ENCODE measurements at regions of chr5 and their contacts with region 1.

Region 1: DNA sequence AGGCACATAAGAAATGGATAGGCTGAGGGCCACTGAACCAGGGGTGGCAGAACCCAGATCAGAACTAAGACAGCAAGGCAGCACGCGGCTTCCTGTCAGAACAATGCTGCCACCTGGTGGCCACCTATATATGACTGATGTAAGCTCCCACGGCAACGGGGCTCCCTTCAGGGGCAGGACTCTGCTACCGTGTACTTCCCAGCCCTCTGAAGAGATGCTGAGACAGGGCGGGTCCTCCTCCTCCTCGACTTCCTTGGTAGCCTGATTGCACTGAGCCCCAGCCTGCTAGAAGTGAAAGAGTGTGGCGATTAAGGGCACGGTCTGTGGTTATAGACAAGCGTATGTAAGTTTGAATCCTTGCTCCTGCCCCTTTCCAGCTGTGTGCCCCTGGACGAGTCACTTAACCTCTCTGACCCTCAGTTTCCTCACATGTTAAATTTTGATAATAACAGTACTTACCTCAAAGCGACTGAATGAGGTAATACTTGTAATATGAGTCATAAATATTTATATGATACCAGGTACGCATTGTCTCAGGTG is 13.3 kb downstream of the RPS14 start:
- DNase-seq: peak; percentile 91
- ATAC-seq: peak; percentile 92
- H3K4me3 ChIP-seq: peak overlapping the region; percentile 16; the same call in 1 of the 2 replicates
- H3K27ac ChIP-seq: no peak overlapping the region
- H3K4me1 ChIP-seq: peaks cover 7% of the 10 kb centered on the region; the same call in 1 of the 2 replicates
- H3K27me3 ChIP-seq: no peaks in the 10 kb centered on the region
- CTCF ChIP-seq: peak; percentile 94

Region 2: DNA sequence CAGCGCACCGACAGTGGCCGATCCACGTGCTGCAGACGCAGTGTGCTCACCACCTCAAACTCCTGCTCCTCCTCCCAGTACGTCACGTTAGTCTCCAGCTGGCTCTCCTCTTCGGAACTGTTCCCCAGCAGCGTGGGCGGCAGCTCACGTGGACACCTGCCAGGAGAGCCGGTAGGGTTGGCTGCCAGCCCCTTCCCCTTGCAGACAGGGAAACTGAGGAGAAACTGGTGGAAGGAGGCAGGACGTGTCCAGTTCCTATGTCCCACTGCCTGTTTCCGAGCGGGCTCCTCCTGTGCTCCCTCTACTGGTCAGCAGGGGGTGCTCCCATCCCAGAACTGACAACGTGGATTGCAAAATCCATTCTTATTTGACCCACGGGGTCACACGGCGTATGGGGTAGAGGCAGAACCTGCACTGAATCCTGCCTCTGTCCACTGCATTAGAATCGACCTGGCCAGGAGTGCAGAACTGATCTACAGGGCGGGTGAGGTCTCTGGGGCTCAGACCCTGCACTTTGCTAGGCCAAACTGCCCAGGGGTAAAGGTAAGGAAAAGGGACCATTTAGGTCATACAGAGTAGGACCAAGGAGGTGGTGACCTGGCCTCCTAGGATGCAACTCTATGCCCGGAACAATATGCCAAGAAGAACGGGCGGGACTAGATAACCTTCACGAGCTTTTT is 306.3 kb before region 1 on chr5:
- CTCF ChIA-PET with region 1: no interaction called
- POLR2A ChIA-PET with region 1: no interaction called
- intact Hi-C with region 1: loop called (anchors 10 kb)
- DNase-seq: peak; percentile 88
- ATAC-seq: peak; percentile 89
- H3K4me3 ChIP-seq: peak overlapping the region; percentile 59
- H3K27ac ChIP-seq: no peak overlapping the region
- H3K4me1 ChIP-seq: peaks cover 6% of the 10 kb centered on the region; the same call in 1 of the 2 replicates
- H3K27me3 ChIP-seq: no peaks in the 10 kb centered on the region
- CTCF ChIP-seq: peak; percentile 99

Region 3: DNA sequence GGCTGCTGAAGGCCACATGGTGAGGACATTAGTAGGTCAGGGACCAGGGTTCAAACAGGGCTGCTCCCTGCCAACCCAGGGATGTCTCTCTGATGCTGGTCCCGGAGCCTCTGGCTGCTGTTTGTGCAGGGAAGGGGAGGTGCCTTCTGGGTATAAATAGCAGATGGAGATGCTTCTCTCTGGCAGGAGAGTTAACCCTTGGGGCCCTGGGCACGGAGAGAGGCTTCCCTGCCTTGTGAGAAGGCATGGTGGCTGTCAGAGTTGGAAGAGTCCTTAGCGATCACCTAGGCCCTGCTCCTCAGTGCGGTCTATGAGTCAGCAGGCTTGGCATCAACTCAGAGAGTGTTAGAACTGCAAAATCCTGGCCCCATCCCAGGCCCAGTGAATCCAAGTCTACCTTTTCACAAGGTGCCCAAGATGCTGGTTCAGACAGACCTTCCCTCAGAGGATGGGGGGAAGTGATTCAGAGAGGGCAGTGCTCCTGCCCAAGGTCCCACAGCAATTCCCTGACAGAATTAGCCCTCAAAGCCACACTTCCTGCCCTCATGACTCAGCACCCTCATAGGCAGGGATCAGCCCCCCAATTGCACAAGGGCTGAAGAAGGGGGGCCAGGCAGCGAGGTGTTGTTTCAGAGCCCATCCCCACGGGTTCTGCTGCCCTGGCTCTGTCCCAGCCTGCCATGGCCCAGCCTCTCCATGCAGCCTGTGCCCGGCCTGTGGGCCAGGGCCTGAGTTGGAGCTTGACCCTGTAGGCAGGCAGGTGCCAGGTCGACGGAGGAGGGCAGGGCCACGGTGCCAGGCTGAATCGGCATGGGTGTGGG is 172.2 kb before region 1 on chr5:
- CTCF ChIA-PET with region 1: no interaction called
- POLR2A ChIA-PET with region 1: no interaction called
- intact Hi-C with region 1: loop called (anchors 5 kb)
- DNase-seq: peak; percentile 100
- ATAC-seq: peak; percentile 85
- H3K4me3 ChIP-seq: no peak overlapping the region
- H3K27ac ChIP-seq: peak overlapping the region; percentile 71
- H3K4me1 ChIP-seq: peaks cover 46% of the 10 kb centered on the region
- H3K27me3 ChIP-seq: no peaks in the 10 kb centered on the region
- CTCF ChIP-seq: no peak

Region 4: GRCh38 chr5:150272526-150272925 is 163.7 kb before region 1 on chr5:
- CTCF ChIA-PET with region 1: no interaction called
- POLR2A ChIA-PET with region 1: no interaction called
- intact Hi-C with region 1: loop called (anchors 1 kb)
- DNase-seq: peak; percentile 72
- ATAC-seq: peak; percentile 74
- H3K4me3 ChIP-seq: no peak overlapping the region
- H3K27ac ChIP-seq: no peak overlapping the region
- H3K4me1 ChIP-seq: no peaks in the 10 kb centered on the region
- H3K27me3 ChIP-seq: 0 out of 2 replicates have a peak, but pooled peaks cover 6% of the 10 kb centered on the region
- CTCF ChIP-seq: peak; percentile 70

Region 5: DNA sequence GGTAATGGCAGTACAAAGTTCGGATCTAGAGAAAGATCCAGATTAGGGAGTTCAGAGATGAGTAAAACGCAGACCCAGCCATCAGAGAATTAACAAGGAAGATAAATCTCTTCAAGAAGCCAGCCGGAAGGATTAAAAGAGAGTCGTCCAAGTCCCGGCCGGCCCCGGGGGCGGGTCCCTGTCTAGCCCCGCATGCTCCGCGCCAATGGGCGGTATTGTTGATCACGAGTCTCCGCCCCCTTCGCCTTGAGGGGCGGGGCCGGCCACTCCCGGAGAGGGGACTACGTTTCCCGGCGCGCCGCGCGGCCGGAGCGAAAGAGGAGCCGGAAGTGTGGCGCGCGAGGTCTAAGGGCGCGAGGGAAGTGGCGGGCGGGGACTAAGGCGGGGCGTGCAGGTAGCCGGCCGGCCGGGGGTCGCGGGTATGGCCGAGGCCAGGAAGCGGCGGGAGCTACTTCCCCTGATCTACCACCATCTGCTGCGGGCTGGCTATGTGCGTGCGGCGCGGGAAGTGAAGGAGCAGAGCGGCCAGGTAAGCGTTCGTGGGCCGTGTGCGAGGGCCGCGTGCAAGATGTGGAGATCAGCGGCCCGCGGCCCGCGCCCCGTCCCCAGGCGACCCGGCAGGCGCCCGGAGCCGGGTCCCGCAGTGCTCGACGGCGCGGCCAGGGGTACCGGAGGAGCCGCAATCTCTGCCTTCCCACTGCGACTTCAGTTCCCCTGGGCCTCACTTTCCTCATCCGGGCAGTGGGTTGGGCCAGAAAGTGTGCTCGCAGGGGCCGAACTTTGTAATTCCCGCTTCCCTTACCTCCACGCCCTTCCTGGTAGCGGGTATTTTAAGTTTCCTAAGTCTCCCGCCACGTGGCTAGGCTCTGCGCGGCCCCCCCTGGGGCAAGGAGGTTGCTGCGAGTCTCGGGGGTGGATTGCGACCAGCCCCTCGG is 78.6 kb before region 1 on chr5 and contains the start of gene TCOF1:
- CTCF ChIA-PET with region 1: no interaction called
- POLR2A ChIA-PET with region 1: no interaction called
- intact Hi-C with region 1: loop called (anchors 1 kb)
- DNase-seq: peak; percentile 100
- ATAC-seq: peak; percentile 93
- H3K4me3 ChIP-seq: peak within 1 kb of the TSS; percentile 94
- H3K27ac ChIP-seq: peak within 1 kb of the TSS; percentile 35
- H3K4me1 ChIP-seq: peaks cover 19% of the 10 kb centered on the region; the same call in 1 of the 2 replicates
- H3K27me3 ChIP-seq: no peaks in the 10 kb centered on the region
- CTCF ChIP-seq: no peak
- total RNA-seq, gene TCOF1: 113 and 149 TPM in 2 replicates

Region 6: GRCh38 chr5:150397782-150398721 is 38.2 kb before region 1 on chr5:
- CTCF ChIA-PET with region 1: interaction called, 3 read pairs
- POLR2A ChIA-PET with region 1: no interaction called
- intact Hi-C with region 1: loop called (anchors 1 kb)
- DNase-seq: no peak
- ATAC-seq: no peak
- H3K4me3 ChIP-seq: no peak overlapping the region
- H3K27ac ChIP-seq: no peak overlapping the region
- H3K4me1 ChIP-seq: no peaks in the 10 kb centered on the region
- H3K27me3 ChIP-seq: no peaks in the 10 kb centered on the region
- CTCF ChIP-seq: no peak; the same call in 1 of the 2 replicates

Region 7: GRCh38 chr5:150419630-150420270 is 16.5 kb before region 1 on chr5:
- CTCF ChIA-PET with region 1: interaction called, 13 read pairs
- POLR2A ChIA-PET with region 1: no interaction called
- intact Hi-C with region 1: no loop called
- DNase-seq: no peak
- ATAC-seq: no peak
- H3K4me3 ChIP-seq: no peak overlapping the region
- H3K27ac ChIP-seq: no peak overlapping the region
- H3K4me1 ChIP-seq: no peaks in the 10 kb centered on the region
- H3K27me3 ChIP-seq: no peaks in the 10 kb centered on the region
- CTCF ChIP-seq: no peak